CD8-positive, alpha-beta T cell (primary cell): ENCODE measurements at regions of chr19 and their contacts with region 1.

Region 1: GRCh38 chr19:17282488-17283255 is 971 bp downstream of the ANKLE1 start:
- DNase-seq: peak; percentile 62 to 87 (median 78)
- ATAC-seq: peak; percentile 95
- H3K4me3 ChIP-seq: peak overlapping the region; percentile 47 to 82
- H3K4me3 Mint-ChIP-seq: peak overlapping the region; percentile 80
- H3K27ac ChIP-seq: no peak overlapping the region
- H3K27ac Mint-ChIP-seq: no peak overlapping the region
- H3K4me1 ChIP-seq: peaks cover 4% of the 10 kb centered on the region
- H3K4me1 Mint-ChIP-seq: peaks cover 2% of the 10 kb centered on the region
- H3K27me3 ChIP-seq: peaks cover 0 to 7% of the 10 kb centered on the region in 2 experiments
- H3K27me3 Mint-ChIP-seq: no peaks in the 10 kb centered on the region
- CTCF ChIP-seq: peak; percentile 97

Region 2: GRCh38 chr19:16714702-16715287 is 567.9 kb before region 1 on chr19:
- CTCF ChIA-PET with region 1: no interaction called
- POLR2A ChIA-PET with region 1: no interaction called
- intact Hi-C with region 1: loop called in 1 of 2 experiments (anchors 2 kb)
- DNase-seq: peak in 7 of 9 experiments; percentile 7 to 58 (median 40)
- ATAC-seq: peak; percentile 40
- H3K4me3 ChIP-seq: no peak overlapping the region
- H3K4me3 Mint-ChIP-seq: no peak overlapping the region
- H3K27ac ChIP-seq: no peak overlapping the region
- H3K27ac Mint-ChIP-seq: no peak overlapping the region
- H3K4me1 ChIP-seq: no peaks in the 10 kb centered on the region
- H3K4me1 Mint-ChIP-seq: no peaks in the 10 kb centered on the region
- H3K27me3 ChIP-seq: peaks cover 0 to 5% of the 10 kb centered on the region in 2 experiments
- H3K27me3 Mint-ChIP-seq: peaks cover 7% of the 10 kb centered on the region
- CTCF ChIP-seq: peak; percentile 61

Region 3: GRCh38 chr19:17069218-17069617 is 213.5 kb before region 1 on chr19:
- CTCF ChIA-PET with region 1: interaction called, 30 read pairs
- POLR2A ChIA-PET with region 1: interaction called, 4 read pairs
- intact Hi-C with region 1: loop called in 1 of 2 experiments (anchors 1 kb)
- DNase-seq: no peak
- ATAC-seq: no peak
- H3K4me3 ChIP-seq: no peak overlapping the region
- H3K4me3 Mint-ChIP-seq: no peak overlapping the region
- H3K27ac ChIP-seq: no peak overlapping the region
- H3K27ac Mint-ChIP-seq: no peak overlapping the region
- H3K4me1 ChIP-seq: peaks cover 27% of the 10 kb centered on the region
- H3K4me1 Mint-ChIP-seq: peaks cover 48% of the 10 kb centered on the region
- H3K27me3 ChIP-seq: no peaks in the 10 kb centered on the region
- H3K27me3 Mint-ChIP-seq: no peaks in the 10 kb centered on the region
- CTCF ChIP-seq: no peak

Region 4: DNA sequence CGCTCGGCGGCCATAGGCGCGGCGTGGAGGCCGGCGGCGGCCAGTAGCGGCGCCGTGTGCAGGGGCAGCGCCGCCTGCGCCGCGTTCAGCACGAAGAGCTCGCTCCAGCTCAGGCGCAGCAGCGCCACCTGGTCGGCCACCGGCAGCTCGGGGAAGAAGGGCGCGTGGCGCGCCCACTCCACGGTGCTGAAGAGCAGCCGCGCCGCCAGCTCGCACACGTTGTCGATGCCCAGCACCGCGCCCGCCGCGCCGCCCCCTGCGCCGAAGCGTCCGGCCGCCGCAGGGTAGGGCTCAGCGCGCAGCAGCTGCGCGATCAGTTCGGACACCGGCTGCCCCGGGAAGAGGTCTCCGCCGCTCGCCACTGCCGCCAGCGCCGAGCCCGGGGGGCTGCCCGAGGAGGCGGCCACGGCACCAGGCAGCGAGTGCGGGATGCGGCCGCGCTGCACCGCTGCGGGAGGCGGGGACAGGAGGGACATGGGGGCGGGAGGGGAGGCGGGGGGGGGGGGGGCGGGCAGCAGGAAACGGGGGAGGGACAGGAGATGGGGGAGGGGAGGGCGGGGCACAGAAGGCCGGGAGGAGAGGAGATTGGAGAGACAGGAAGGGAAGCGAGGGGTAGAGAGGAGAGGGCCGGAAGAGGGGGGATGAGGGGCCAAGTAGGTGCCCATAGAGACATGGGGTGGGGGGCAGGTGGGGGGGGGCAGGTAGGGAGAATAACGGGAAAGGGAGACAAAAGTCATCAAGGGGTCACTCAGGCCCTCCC is 46.9 kb before region 1 on chr19:
- CTCF ChIA-PET with region 1: interaction called, 11 read pairs
- POLR2A ChIA-PET with region 1: no interaction called
- intact Hi-C with region 1: no loop called
- DNase-seq: peak; percentile 52 to 91 (median 78)
- ATAC-seq: peak; percentile 89
- H3K4me3 ChIP-seq: peak overlapping the region; percentile 63 to 86
- H3K4me3 Mint-ChIP-seq: peak overlapping the region; percentile 78
- H3K27ac ChIP-seq: peak overlapping the region in 1 of 2 experiments; percentile 40
- H3K27ac Mint-ChIP-seq: no peak overlapping the region
- H3K4me1 ChIP-seq: peaks cover 13% of the 10 kb centered on the region
- H3K4me1 Mint-ChIP-seq: peaks cover 10% of the 10 kb centered on the region
- H3K27me3 ChIP-seq: no peaks in the 10 kb centered on the region
- H3K27me3 Mint-ChIP-seq: no peaks in the 10 kb centered on the region
- CTCF ChIP-seq: peak; percentile 58

Region 5: GRCh38 chr19:17266975-17267788 is 15.5 kb before region 1 on chr19 and contains the start of gene BABAM1:
- CTCF ChIA-PET with region 1: interaction called, 148 read pairs
- POLR2A ChIA-PET with region 1: interaction called, 3 read pairs
- intact Hi-C with region 1: loop called in 1 of 2 experiments (anchors 2 kb)
- DNase-seq: peak; percentile 81 to 98 (median 92)
- ATAC-seq: peak; percentile 93
- H3K4me3 ChIP-seq: peak within 1 kb of the TSS; percentile 72 to 82
- H3K4me3 Mint-ChIP-seq: peak within 1 kb of the TSS; percentile 79
- H3K27ac ChIP-seq: peak within 1 kb of the TSS; percentile 61 to 77
- H3K27ac Mint-ChIP-seq: peak within 1 kb of the TSS; percentile 63
- H3K4me1 ChIP-seq: peaks cover 14% of the 10 kb centered on the region
- H3K4me1 Mint-ChIP-seq: peaks cover 18% of the 10 kb centered on the region
- H3K27me3 ChIP-seq: no peaks in the 10 kb centered on the region
- H3K27me3 Mint-ChIP-seq: no peaks in the 10 kb centered on the region
- CTCF ChIP-seq: no peak
- total RNA-seq, gene BABAM1: 46.9 to 58.0 TPM

Region 6: DNA sequence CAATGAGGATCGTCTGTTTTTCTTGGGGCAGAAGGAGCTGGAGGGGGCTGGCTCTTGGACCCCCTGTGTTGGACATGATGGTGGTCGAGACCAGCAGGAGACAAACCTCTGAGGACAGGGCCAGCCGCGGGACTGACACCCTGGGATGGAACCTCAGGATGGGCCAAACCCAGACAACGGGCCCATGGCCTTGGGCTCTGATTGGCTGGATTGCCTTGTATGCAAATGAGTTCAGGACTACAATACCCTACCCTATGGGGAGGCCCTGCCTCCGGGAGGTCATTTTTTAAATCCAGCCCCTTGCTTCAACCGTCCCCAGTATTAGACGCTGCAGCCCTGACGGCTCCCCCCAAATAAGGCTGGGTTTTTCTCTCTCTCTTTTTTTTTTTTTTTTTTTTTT is 611.1 kb after region 1 on chr19:
- CTCF ChIA-PET with region 1: no interaction called
- POLR2A ChIA-PET with region 1: no interaction called
- intact Hi-C with region 1: no loop called
- DNase-seq: no peak
- ATAC-seq: no peak
- H3K4me3 ChIP-seq: no peak overlapping the region
- H3K4me3 Mint-ChIP-seq: no peak overlapping the region
- H3K27ac ChIP-seq: no peak overlapping the region
- H3K27ac Mint-ChIP-seq: no peak overlapping the region
- H3K4me1 ChIP-seq: no peaks in the 10 kb centered on the region
- H3K4me1 Mint-ChIP-seq: no peaks in the 10 kb centered on the region
- H3K27me3 ChIP-seq: peaks cover 0 to 4% of the 10 kb centered on the region in 2 experiments
- H3K27me3 Mint-ChIP-seq: peaks cover 7% of the 10 kb centered on the region
- CTCF ChIP-seq: no peak